Prostate gland (tissue), 2 donors: ENCODE measurements at regions of chr3 and their contacts with region 1.

Region 1: GRCh38 chr3:52070724-52071621 is 14.6 kb upstream of the DUSP7 start:
- DNase-seq: no peak
- H3K4me3 ChIP-seq: no peak overlapping the region
- H3K27ac ChIP-seq: no peak overlapping the region
- H3K4me1 ChIP-seq: no peaks in the 10 kb centered on the region
- H3K27me3 ChIP-seq: no peaks in the 10 kb centered on the region
- CTCF ChIP-seq: no peak
- POLR2A ChIP-seq: no peak

Region 2: GRCh38 chr3:52112056-52112455 is 41.1 kb after region 1 on chr3:
- intact Hi-C with region 1: no loop called
- DNase-seq: no peak
- H3K4me3 ChIP-seq: no peak overlapping the region
- H3K27ac ChIP-seq: no peak overlapping the region
- H3K4me1 ChIP-seq: no peaks in the 10 kb centered on the region
- H3K27me3 ChIP-seq: no peaks in the 10 kb centered on the region
- CTCF ChIP-seq: no peak
- POLR2A ChIP-seq: no peak

Region 3: GRCh38 chr3:52123106-52123725 is 52.2 kb after region 1 on chr3:
- intact Hi-C with region 1: loop called (anchors 5 kb)
- DNase-seq: peak; percentile 68
- H3K4me3 ChIP-seq: no peak overlapping the region
- H3K27ac ChIP-seq: no peak overlapping the region
- H3K4me1 ChIP-seq: no peaks in the 10 kb centered on the region
- H3K27me3 ChIP-seq: no peaks in the 10 kb centered on the region
- CTCF ChIP-seq: peak; percentile 84 to 96 (median 90)
- POLR2A ChIP-seq: no peak

Region 4: GRCh38 chr3:52471371-52472238 is 400.6 kb after region 1 on chr3:
- intact Hi-C with region 1: no loop called
- DNase-seq: peak; percentile 67
- H3K4me3 ChIP-seq: no peak overlapping the region
- H3K27ac ChIP-seq: peak overlapping the region; percentile 45 to 82
- H3K4me1 ChIP-seq: peaks cover 31% of the 10 kb centered on the region
- H3K27me3 ChIP-seq: no peaks in the 10 kb centered on the region
- CTCF ChIP-seq: peak; percentile 68 to 80 (median 74)
- POLR2A ChIP-seq: no peak